Caco-2 (cell line): ENCODE measurements at regions of chr4 and their contacts with region 1.

Region 1: GRCh38 chr4:188081396-188081795 is 28.0 kb downstream of the TRIML2 start:
- DNase-seq: peak; percentile 58 to 67
- H3K4me3 ChIP-seq: no peak overlapping the region
- H3K4me3 Mint-ChIP-seq: peak overlapping the region; percentile 56
- H3K27ac Mint-ChIP-seq: peak overlapping the region; percentile 91
- H3K4me1 ChIP-seq: peaks cover 38% of the 10 kb centered on the region
- H3K4me1 Mint-ChIP-seq: peaks cover 26% of the 10 kb centered on the region
- H3K27me3 ChIP-seq: no peaks in the 10 kb centered on the region
- H3K27me3 Mint-ChIP-seq: no peaks in the 10 kb centered on the region
- CTCF ChIP-seq: no peak

Region 2: DNA sequence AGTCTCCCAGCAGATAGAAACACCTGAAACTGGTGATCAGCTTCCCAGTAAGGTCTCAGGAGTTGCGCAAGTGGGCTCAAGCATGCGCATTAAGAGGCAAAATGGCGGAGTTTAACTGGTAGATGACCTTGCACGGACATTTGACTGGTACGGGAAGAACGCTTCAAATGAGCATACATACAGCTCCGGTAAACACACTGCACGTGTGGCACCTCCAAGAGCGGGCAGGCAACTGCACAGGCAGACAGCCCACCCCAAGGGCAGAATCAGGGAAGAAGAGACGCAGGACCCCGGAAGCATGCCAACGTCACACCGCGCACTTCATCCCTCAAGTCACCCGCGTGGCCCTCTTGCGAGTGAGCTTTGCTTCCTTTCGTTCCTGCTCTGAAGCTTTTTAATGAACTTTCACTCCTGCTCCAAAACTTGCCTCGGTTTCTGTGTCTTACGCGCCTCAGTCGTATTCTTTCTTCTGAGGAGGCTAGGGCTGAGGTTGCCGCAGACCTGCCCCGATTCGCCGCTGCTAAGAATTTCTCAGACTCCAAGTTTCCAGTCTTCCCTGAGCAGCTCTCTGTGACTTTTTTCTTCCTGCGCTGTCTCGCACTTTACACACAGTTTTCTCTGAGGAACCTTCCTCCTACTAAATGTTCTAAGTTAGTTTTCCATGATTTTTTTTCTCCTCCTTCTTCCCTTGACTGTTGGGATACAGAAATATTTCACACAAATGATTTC is 266.5 kb before region 1 on chr4:
- CTCF ChIA-PET with region 1: no interaction called
- POLR2A ChIA-PET with region 1: interaction called, 4 read pairs
- intact Hi-C with region 1: loop called (anchors 5 kb)
- DNase-seq: peak; percentile 82 to 84
- H3K4me3 ChIP-seq: peak overlapping the region; percentile 71
- H3K4me3 Mint-ChIP-seq: peak overlapping the region; percentile 94
- H3K27ac Mint-ChIP-seq: peak overlapping the region; percentile 98
- H3K4me1 ChIP-seq: 0 out of 2 replicates have a peak, but pooled peaks cover 8% of the 10 kb centered on the region
- H3K4me1 Mint-ChIP-seq: peaks cover 6% of the 10 kb centered on the region
- H3K27me3 ChIP-seq: no peaks in the 10 kb centered on the region
- H3K27me3 Mint-ChIP-seq: no peaks in the 10 kb centered on the region
- CTCF ChIP-seq: no peak

Region 3: DNA sequence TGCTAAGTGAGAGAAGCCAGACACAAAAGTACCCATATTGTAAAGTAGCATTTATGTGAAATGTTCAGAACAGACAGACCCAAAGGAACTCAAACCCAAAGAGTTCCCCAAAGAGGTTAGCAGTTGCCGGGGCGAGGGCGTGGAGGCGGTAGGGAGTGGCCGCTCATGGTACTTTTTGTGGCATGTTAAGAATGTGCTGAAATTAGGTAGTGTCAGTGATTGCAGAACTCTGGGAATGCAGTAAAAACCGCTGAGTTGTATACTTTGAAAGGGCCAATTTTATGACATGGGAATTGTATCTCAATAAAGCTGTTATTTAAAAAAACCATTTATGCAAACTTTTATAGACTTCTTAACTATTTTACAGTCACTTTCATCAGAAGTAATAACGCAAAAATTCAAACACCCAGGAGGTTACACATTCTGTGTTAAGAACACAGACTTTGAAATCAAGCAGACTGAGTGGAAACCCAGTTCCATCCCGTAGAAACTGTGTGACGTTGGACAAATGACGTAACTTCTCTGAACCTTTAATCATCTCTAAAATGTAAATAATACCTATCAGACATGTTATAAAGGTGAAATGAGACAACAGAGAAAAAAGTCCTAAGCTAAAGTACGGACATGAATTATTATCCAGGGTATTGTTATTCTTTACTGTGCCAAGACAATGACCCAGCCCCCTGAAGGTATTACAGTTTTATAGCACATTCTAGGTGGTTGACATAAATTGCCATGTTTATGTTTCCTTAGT is 66.2 kb before region 1 on chr4:
- CTCF ChIA-PET with region 1: no interaction called
- POLR2A ChIA-PET with region 1: interaction called, 3 read pairs
- intact Hi-C with region 1: loop called (anchors 1 kb)
- DNase-seq: peak; percentile 69 to 79
- H3K4me3 ChIP-seq: no peak overlapping the region
- H3K4me3 Mint-ChIP-seq: peak overlapping the region; percentile 44
- H3K27ac Mint-ChIP-seq: peak overlapping the region; percentile 91
- H3K4me1 ChIP-seq: peaks cover 38% of the 10 kb centered on the region
- H3K4me1 Mint-ChIP-seq: peaks cover 28% of the 10 kb centered on the region
- H3K27me3 ChIP-seq: no peaks in the 10 kb centered on the region
- H3K27me3 Mint-ChIP-seq: no peaks in the 10 kb centered on the region
- CTCF ChIP-seq: no peak

Region 4: GRCh38 chr4:188107931-188108843 is 26.8 kb after region 1 on chr4:
- CTCF ChIA-PET with region 1: interaction called, 3 read pairs
- POLR2A ChIA-PET with region 1: interaction called, 12 read pairs
- intact Hi-C with region 1: loop called (anchors 1 kb)
- DNase-seq: peak in 1 of 2 experiments; percentile 13
- H3K4me3 ChIP-seq: no peak overlapping the region
- H3K4me3 Mint-ChIP-seq: peak overlapping the region; percentile 36
- H3K27ac Mint-ChIP-seq: peak overlapping the region; percentile 29
- H3K4me1 ChIP-seq: peaks cover 32% of the 10 kb centered on the region
- H3K4me1 Mint-ChIP-seq: peaks cover 24% of the 10 kb centered on the region
- H3K27me3 ChIP-seq: no peaks in the 10 kb centered on the region
- H3K27me3 Mint-ChIP-seq: no peaks in the 10 kb centered on the region
- CTCF ChIP-seq: no peak

Region 5: DNA sequence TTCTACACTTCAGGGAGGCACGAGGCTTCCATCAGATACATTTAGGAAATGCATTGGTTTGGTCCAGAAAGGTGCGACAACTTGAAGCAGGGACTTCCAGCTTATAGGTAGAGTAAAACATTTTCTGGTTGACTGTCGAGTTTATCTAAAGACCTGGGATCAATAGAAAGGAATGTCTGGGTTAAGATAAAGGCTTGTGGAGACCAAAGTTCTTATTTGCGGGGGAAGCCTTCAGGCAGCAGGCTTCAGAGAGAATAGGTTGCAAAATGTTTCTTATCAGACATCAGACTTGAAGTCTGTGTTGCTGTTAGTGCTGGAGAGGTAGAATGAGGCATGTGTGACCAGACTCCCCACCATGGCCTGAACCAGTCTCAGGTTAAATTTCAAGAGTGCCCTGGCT is 248.1 kb after region 1 on chr4:
- CTCF ChIA-PET with region 1: interaction called, 3 read pairs
- POLR2A ChIA-PET with region 1: no interaction called
- intact Hi-C with region 1: loop called (anchors 1 kb)
- DNase-seq: peak; percentile 75 to 78
- H3K4me3 ChIP-seq: no peak overlapping the region
- H3K4me3 Mint-ChIP-seq: peak overlapping the region; percentile 47
- H3K27ac Mint-ChIP-seq: peak overlapping the region; percentile 93
- H3K4me1 ChIP-seq: peaks cover 41% of the 10 kb centered on the region
- H3K4me1 Mint-ChIP-seq: peaks cover 27% of the 10 kb centered on the region
- H3K27me3 ChIP-seq: no peaks in the 10 kb centered on the region
- H3K27me3 Mint-ChIP-seq: no peaks in the 10 kb centered on the region
- CTCF ChIP-seq: no peak